Panc1 (cell line): ENCODE measurements at regions of chr7 and their contacts with region 1.

Region 1: GRCh38 chr7:74544706-74545469 is 91.2 kb downstream of the GTF2IRD1 start:
- DNase-seq: peak; percentile 17
- ATAC-seq: peak; percentile 87
- H3K4me3 ChIP-seq: no peak overlapping the region
- H3K27ac ChIP-seq: no peak overlapping the region
- H3K4me1 ChIP-seq: no peaks in the 10 kb centered on the region
- H3K27me3 ChIP-seq: no peaks in the 10 kb centered on the region
- CTCF ChIP-seq: peak; percentile 83; the same call in 1 of the 2 replicates

Region 2: GRCh38 chr7:74254129-74254857 is 290.6 kb before region 1 on chr7 and contains the start of gene RFC2:
- CTCF ChIA-PET with region 1: no interaction called
- POLR2A ChIA-PET with region 1: interaction called, 10 read pairs
- in situ Hi-C with region 1: no loop called
- intact Hi-C with region 1: no loop called
- DNase-seq: peak; percentile 71
- ATAC-seq: peak; percentile 99
- H3K4me3 ChIP-seq: peak within 1 kb of the TSS; percentile 74 to 88
- H3K27ac ChIP-seq: peak within 1 kb of the TSS; percentile 85
- H3K4me1 ChIP-seq: peaks cover 15% of the 10 kb centered on the region
- H3K27me3 ChIP-seq: no peaks in the 10 kb centered on the region
- CTCF ChIP-seq: no peak
- total RNA-seq, gene RFC2: 56.2 TPM

Region 3: DNA sequence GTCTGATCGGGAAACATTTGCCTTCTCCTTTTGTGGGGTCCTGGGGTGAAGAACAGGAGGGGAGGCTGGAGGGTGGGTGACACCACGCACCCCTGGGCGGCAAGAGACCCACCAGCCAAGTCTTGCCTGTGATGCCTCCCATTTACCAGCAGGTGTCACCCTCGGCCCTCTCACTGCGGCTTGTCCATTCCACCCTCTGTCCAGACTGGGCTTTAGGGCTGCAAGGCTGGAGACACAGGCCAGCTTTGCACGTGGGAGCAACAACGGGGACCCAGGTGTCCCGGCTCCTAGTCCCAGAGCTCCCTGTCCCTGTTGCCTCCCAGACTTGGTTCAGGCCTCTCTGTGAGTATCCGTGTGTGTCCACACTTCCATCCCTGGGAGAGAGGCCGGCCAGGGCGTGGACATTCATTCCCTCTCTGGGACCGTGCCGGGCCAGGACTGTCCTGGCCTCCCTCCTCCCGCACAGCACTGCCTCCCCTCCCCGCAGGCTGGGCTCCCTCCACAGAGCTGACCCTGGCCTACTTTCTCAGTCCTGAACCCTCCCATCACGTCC is 127.4 kb before region 1 on chr7:
- CTCF ChIA-PET with region 1: no interaction called
- POLR2A ChIA-PET with region 1: no interaction called
- in situ Hi-C with region 1: no loop called
- intact Hi-C with region 1: loop called (anchors 2 kb)
- DNase-seq: peak; percentile 77
- ATAC-seq: peak; percentile 96
- H3K4me3 ChIP-seq: no peak overlapping the region
- H3K27ac ChIP-seq: peak overlapping the region; percentile 64
- H3K4me1 ChIP-seq: no peaks in the 10 kb centered on the region
- H3K27me3 ChIP-seq: no peaks in the 10 kb centered on the region
- CTCF ChIP-seq: peak; percentile 97